ENCODE measurements at regions of chr16 and their contacts with region 1.

Region 1: GRCh38 chr16:74998481-74999218 is at the start of gene ZNRF1:
- DNase-seq: peak; percentile 69 to 80
- ATAC-seq: peak; percentile 86
- H3K4me3 ChIP-seq: peak within 1 kb of the TSS; percentile 86 to 100 (median 94)
- H3K27ac ChIP-seq: peak within 1 kb of the TSS; percentile 82 to 94 (median 88)
- H3K4me1 ChIP-seq: peaks cover 20 to 24% of the 10 kb centered on the region in 2 donors
- H3K27me3 ChIP-seq: no peaks in the 10 kb centered on the region
- CTCF ChIP-seq: peak; percentile 83 to 90 (median 89)
- POLR2A ChIP-seq: peak; percentile 63 to 81
- total RNA-seq, gene ZNRF1: 21.7 to 37.1 (median 30.2) TPM

Region 2: GRCh38 chr16:75044800-75045430 is 46.3 kb after region 1 on chr16:
- in situ Hi-C with region 1: no loop called
- intact Hi-C with region 1: loop called (anchors 5 kb)
- DNase-seq: peak; percentile 73 to 80
- ATAC-seq: peak; percentile 94 to 95
- H3K4me3 ChIP-seq: no peak overlapping the region
- H3K27ac ChIP-seq: peak overlapping the region; percentile 75 to 85 (median 80)
- H3K4me1 ChIP-seq: peaks cover 63 to 65% of the 10 kb centered on the region in 2 donors
- H3K27me3 ChIP-seq: no peaks in the 10 kb centered on the region
- CTCF ChIP-seq: no peak
- POLR2A ChIP-seq: no peak

Region 3: GRCh38 chr16:75116081-75116910 is 117.6 kb after region 1 on chr16 and contains the start of gene LDHD:
- in situ Hi-C with region 1: loop called in 2 of 4 experiments (anchors 5 kb)
- intact Hi-C with region 1: loop called (anchors 1 kb)
- DNase-seq: peak; percentile 89 to 95
- ATAC-seq: peak; percentile 94 to 96
- H3K4me3 ChIP-seq: peak within 1 kb of the TSS; percentile 69 to 77 (median 75)
- H3K27ac ChIP-seq: peak within 1 kb of the TSS; percentile 95 to 99 (median 96)
- H3K4me1 ChIP-seq: peaks cover 29 to 38% of the 10 kb centered on the region in 2 donors
- H3K27me3 ChIP-seq: no peaks in the 10 kb centered on the region
- CTCF ChIP-seq: no peak
- POLR2A ChIP-seq: peak; percentile 87 to 92
- total RNA-seq, gene LDHD: 27.8 to 54.5 (median 44.2) TPM

Region 4: GRCh38 chr16:75420987-75421819 is 422.6 kb after region 1 on chr16:
- in situ Hi-C with region 1: loop called in 1 of 4 experiments (anchors 25 kb)
- intact Hi-C with region 1: no loop called
- DNase-seq: no peak
- ATAC-seq: no peak
- H3K4me3 ChIP-seq: no peak overlapping the region
- H3K27ac ChIP-seq: no peak overlapping the region
- H3K4me1 ChIP-seq: peaks cover 16 to 24% of the 10 kb centered on the region in 2 donors
- H3K27me3 ChIP-seq: no peaks in the 10 kb centered on the region
- CTCF ChIP-seq: no peak
- POLR2A ChIP-seq: no peak

Measured in gastrocnemius medialis (tissue), 4 donors.